A549 (cell line): ENCODE measurements at regions of chr3 and their contacts with region 1.

Region 1: DNA sequence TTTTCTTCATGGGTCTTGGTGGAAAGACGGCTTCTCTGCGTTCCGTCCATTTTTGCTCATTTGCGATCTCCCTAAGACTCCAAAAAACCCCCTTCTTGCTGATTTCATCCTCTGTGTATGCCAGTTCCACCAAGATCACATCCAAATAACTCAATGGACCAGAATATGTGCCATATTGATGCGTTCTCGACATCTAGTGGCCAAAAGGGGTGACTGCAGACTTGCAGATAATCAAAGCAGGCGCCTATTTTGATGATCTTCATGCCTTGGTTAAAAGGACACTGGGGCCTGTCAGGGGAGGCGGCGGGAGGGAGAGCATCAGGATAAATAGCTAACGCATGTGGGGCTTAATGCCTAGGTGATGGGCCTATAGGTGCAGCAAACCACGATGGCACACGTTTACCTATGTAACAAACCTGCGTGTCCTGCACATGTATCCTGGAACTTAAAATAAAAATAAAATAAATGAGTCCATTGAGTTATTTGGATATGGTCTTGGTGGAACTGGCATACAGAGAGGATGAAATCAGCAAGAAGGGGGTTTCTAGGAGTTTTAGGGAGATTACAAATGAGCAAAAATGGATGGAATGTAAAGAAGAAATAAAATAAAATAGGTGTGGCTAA is 104.2 kb upstream of the RAD18 start:
- DNase-seq: peak; percentile 59 to 66
- ATAC-seq: peak; percentile 86 to 92
- H3K4me3 ChIP-seq: no peak overlapping the region
- H3K27ac ChIP-seq: no peak overlapping the region
- H3K4me1 ChIP-seq: no peaks in the 10 kb centered on the region
- CTCF ChIP-seq: peak; percentile 85
- EP300 ChIP-seq: no peak
- POLR2A ChIP-seq: no peak
- RAD21 ChIP-seq: peak; percentile 82 to 90

Region 2: DNA sequence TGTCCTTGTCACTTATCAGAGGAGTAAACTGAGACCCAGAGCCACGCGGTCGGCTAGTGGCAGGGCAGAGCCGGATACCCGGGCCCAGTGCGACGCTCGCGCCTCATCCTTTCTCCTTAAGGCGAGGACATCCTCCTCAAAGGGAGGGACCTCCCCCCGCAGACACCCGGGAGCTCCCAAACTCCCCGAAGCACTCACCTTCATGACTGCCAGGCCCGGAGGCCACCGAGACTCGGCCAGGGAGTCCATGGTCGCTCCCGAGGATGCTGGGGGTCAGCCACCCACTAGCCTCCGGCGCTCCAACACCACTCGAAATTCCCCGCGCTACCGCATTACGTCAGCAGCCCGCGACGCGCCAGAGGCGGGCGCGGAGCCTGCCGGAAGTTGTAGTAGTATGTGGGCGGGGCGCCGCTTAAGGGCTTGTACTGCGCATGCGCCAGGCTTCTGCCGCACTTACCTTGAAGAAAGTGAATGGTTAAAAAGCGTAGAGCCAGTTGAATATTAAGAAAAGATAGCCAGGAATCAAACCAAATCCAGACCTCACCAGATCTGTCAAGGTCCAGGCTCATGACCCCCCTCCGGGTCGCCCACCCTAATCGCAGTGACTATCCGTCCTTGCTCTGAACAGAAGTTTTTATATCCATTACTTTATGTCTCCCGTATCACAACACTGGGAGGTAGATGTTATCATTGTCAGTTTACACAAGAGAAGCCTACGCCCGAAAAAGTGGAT is 104.2 kb before region 1 on chr3 and contains the start of gene RAD18:
- CTCF ChIA-PET with region 1: interaction called, 10 read pairs
- POLR2A ChIA-PET with region 1: no interaction called
- DNase-seq: peak; percentile 80 to 92
- ATAC-seq: peak; percentile 89 to 93
- H3K4me3 ChIP-seq: peak within 1 kb of the TSS; percentile 66
- H3K27ac ChIP-seq: peak within 1 kb of the TSS; percentile 65 to 86
- H3K4me1 ChIP-seq: peaks cover 30% of the 10 kb centered on the region
- CTCF ChIP-seq: no peak
- EP300 ChIP-seq: no peak
- POLR2A ChIP-seq: peak; percentile 43
- RAD21 ChIP-seq: no peak
- polyA plus RNA-seq, gene RAD18: 16.3 and 23.2 TPM in 2 replicates

Region 3: GRCh38 chr3:9088441-9089353 is 21.2 kb after region 1 on chr3:
- CTCF ChIA-PET with region 1: interaction called, 11 read pairs
- POLR2A ChIA-PET with region 1: no interaction called
- DNase-seq: no peak
- ATAC-seq: 0 out of 6 replicates have a peak, but pooled peaks of 1 of the 2 experiments have one; percentile 11
- H3K4me3 ChIP-seq: no peak overlapping the region
- H3K27ac ChIP-seq: no peak overlapping the region
- H3K4me1 ChIP-seq: no peaks in the 10 kb centered on the region
- CTCF ChIP-seq: no peak
- EP300 ChIP-seq: no peak
- POLR2A ChIP-seq: no peak
- RAD21 ChIP-seq: no peak